MCF 10A (cell line): ENCODE measurements at regions of chrX and their contacts with region 1.

Region 1: DNA sequence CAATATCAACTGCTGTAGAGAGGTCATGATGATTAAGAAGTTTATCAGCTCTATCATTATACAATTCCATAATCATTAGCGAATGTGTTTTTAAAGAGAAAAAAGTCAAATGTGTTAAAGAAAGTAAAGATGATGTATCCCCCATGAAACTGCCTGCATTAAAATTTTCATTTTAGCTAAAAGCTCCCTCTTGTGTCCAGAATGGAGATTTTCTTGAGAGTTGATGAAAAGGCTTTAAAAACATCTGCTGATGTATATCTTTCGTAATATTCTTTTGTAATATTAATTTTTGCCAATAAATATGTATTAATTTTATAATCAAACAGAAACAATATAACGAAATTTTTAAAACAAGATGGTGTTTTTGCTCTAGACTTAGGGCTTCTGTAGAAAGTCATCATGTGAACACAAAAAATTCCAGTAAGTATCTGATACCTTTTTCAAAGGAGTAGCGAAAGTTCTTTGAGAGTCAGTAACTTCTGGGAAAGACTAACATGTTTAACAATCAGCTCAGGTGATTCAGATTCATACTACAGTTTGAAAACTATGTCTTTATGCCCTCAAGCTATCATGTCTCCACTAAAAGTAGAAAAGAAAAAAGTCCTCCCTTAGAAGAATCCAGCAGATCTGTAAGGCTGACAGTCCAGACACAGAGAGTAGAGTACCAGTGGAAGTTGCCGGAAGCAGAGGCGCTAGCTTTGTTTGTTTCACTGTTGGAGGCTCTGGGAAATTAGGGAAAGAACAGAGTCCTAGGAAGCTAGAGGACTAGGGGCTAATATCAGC is 52.2 kb upstream of the LHFPL1 start:
- DNase-seq: no peak
- H3K4me3 Mint-ChIP-seq: no peak overlapping the region
- H3K27ac Mint-ChIP-seq: no peak overlapping the region
- H3K4me1 Mint-ChIP-seq: no peaks in the 10 kb centered on the region
- H3K27me3 Mint-ChIP-seq: peaks cover 94% of the 10 kb centered on the region
- CTCF ChIP-seq: peak; percentile 37

Region 2: GRCh38 chrX:111719426-111720210 is 1012.4 kb before region 1 on chrX:
- CTCF ChIA-PET with region 1: interaction called, 7 read pairs
- POLR2A ChIA-PET with region 1: no interaction called
- intact Hi-C with region 1: loop called (anchors 10 kb)
- DNase-seq: peak; percentile 3
- H3K4me3 Mint-ChIP-seq: no peak overlapping the region
- H3K27ac Mint-ChIP-seq: no peak overlapping the region
- H3K4me1 Mint-ChIP-seq: peaks cover 5% of the 10 kb centered on the region
- H3K27me3 Mint-ChIP-seq: peaks cover 35% of the 10 kb centered on the region
- CTCF ChIP-seq: peak; percentile 39

Region 3: DNA sequence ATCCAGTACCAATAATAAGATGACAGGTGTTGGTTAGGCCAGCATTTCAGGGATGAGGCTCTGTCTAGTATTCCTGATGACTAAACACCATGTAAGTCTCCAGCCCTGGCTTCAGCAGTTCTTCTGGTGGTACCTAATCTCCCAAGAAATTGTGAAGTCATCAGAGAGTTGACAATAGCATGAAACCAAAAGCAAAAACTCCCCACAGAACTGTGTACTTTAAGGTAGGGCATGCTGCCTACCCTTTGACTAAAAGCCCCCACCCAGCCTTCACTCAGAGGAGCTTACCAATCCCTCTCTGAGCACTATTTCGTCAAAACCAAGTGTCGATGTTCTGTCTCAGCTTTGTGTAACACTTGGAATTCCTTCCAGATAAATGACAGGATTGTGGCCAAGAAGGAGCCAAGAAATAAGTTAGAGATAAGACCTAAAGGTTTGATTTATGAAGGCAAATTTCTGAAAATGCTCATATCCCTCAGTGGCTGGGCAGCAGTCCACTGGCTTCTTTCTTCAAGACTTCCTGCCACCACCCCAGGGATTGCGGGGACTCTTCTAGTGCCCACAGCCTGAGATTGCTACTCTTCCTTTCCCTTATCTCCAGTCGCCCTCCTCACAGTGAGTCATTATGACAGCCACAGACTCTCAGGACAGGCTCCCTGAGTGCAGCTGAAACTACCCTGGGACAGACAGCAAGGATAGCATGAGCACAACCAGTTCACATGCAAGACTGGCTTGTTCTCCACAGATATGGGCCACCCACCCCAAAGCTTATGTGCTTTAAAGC is 15.0 kb after region 1 on chrX:
- CTCF ChIA-PET with region 1: interaction called, 11 read pairs
- POLR2A ChIA-PET with region 1: no interaction called
- intact Hi-C with region 1: no loop called
- DNase-seq: no peak
- H3K4me3 Mint-ChIP-seq: no peak overlapping the region
- H3K27ac Mint-ChIP-seq: no peak overlapping the region
- H3K4me1 Mint-ChIP-seq: no peaks in the 10 kb centered on the region
- H3K27me3 Mint-ChIP-seq: peaks cover 62% of the 10 kb centered on the region
- CTCF ChIP-seq: no peak

Region 4: DNA sequence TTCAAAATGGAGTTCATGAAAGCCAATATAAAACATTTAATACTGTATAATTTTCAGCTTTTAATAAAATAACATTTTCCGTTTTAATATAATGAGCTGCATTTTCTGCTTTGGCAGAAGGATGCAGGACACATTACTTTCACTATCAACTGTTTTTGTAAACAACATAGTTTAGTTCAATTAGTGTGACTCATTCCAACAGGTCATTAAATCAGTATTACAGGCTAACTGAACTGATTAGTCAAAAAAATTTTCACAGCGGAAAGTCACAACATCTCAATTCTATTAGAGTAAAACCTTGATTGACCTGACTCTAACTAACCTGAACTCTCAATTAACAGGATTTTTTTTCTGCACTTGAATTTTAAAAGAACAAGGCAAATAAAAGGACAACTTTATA is 259.8 kb after region 1 on chrX:
- CTCF ChIA-PET with region 1: no interaction called
- POLR2A ChIA-PET with region 1: no interaction called
- intact Hi-C with region 1: no loop called
- DNase-seq: no peak
- H3K4me3 Mint-ChIP-seq: no peak overlapping the region
- H3K27ac Mint-ChIP-seq: no peak overlapping the region
- H3K4me1 Mint-ChIP-seq: no peaks in the 10 kb centered on the region
- H3K27me3 Mint-ChIP-seq: peaks cover 27% of the 10 kb centered on the region
- CTCF ChIP-seq: no peak